ENCODE measurements at regions of chr9 and their contacts with region 1.

Region 1: DNA sequence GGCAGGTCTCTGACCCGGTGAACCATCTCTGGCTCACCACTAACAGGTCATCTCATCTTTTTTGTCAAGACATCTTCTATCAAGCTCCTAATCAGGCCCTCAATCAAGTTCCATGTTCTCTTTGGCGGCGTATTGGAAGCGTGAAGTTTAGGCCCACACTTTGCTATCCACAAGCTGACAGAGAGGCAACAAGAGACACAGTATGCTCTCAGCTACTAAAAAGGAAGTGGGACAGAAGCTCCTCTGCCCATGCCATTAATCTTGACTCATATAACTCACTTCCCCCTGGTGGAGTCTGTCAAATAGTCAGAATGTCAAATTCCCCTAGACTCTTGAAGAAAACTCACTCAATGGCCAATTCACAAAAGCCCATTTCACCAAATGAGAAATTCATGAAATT is 77.6 kb upstream of the TMC1 start:
- DNase-seq: peak; percentile 8
- ATAC-seq: peak; percentile 72
- H3K4me3 Mint-ChIP-seq: no peak overlapping the region
- H3K27ac Mint-ChIP-seq: peak overlapping the region; percentile 55
- H3K4me1 Mint-ChIP-seq: peaks cover 24% of the 10 kb centered on the region
- H3K27me3 Mint-ChIP-seq: no peaks in the 10 kb centered on the region

Region 2: DNA sequence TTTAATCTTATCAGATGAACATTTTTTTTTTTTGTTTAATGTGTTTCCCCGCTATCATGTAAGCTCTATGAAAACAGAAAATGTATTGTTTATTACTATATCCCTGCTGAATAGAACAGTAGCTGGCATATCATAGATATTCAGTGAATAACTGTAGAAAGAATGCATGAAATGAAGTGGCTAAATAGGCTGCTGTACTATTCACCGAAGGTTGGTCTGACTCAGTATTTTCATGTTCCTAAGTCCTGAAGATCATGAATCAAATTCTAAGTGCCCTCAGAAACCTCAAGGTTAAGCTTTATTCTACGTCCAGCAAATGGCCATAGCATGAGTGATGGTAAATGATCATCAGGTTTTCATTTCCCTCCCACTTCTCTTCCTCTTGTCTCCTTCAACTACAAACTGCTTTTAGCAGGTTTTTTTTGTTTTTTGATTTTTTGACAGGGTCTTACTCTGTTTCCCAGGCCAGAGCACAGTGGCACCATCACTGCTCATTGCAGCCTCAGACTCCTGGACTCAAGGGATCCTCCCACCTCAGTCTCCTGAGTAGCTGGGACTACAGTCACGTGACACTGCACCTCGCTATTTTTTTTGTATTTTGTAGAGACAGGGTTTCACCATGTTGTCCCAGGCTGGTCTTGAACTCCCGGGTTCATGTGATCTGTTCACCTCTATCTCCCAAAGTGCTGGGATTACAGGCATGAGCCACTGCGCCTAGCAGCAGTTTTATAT is 59.7 kb before region 1 on chr9:
- CTCF ChIA-PET with region 1: no interaction called
- POLR2A ChIA-PET with region 1: no interaction called
- intact Hi-C with region 1: loop called in 1 of 2 experiments (anchors 2 kb)
- DNase-seq: no peak
- ATAC-seq: no peak
- H3K4me3 Mint-ChIP-seq: no peak overlapping the region
- H3K27ac Mint-ChIP-seq: no peak overlapping the region
- H3K4me1 Mint-ChIP-seq: peaks cover 9% of the 10 kb centered on the region
- H3K27me3 Mint-ChIP-seq: peaks cover 2% of the 10 kb centered on the region

Region 3: GRCh38 chr9:72485821-72486593 is 42.2 kb after region 1 on chr9:
- CTCF ChIA-PET with region 1: no interaction called
- POLR2A ChIA-PET with region 1: no interaction called
- intact Hi-C with region 1: no loop called
- DNase-seq: no peak
- ATAC-seq: no peak
- H3K4me3 Mint-ChIP-seq: no peak overlapping the region
- H3K27ac Mint-ChIP-seq: no peak overlapping the region
- H3K4me1 Mint-ChIP-seq: no peaks in the 10 kb centered on the region
- H3K27me3 Mint-ChIP-seq: peaks cover 2% of the 10 kb centered on the region

Region 4: DNA sequence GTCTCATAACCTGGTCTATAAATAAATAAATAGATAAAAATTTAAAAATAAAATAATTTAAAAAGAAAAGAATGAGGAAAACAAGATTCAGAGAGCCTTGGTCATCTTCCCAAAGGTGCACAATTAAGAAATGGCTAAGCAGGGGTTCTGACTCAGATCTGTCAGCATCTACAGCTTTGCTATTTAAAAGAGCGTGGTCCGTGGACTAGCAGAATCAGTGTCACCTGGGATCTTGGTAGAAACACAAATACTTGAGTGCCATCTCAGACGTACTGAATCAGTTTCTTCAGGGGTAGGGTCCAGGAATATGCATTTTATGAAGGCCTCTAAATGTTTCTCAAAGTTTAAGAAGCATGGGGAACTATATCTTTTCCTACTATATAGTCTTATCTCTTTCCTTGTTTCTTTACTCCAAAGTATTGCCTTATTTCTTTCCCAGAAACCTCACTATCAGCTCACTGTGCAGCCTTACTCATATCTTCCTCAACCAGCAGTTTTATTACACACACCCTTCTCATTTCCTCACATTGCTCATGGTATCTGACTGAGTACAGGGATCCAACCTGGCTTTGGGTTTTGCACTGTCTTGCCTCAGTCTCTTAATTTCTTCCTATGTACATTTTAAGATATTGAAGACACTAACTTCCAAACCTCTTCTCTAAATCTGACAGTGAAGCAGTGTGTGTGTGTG is 136.2 kb after region 1 on chr9:
- CTCF ChIA-PET with region 1: no interaction called
- POLR2A ChIA-PET with region 1: no interaction called
- intact Hi-C with region 1: loop called in 1 of 2 experiments (anchors 5 kb)
- DNase-seq: no peak
- ATAC-seq: peak; percentile 89
- H3K4me3 Mint-ChIP-seq: no peak overlapping the region
- H3K27ac Mint-ChIP-seq: no peak overlapping the region
- H3K4me1 Mint-ChIP-seq: peaks cover 21% of the 10 kb centered on the region
- H3K27me3 Mint-ChIP-seq: peaks cover 3% of the 10 kb centered on the region

Region 5: DNA sequence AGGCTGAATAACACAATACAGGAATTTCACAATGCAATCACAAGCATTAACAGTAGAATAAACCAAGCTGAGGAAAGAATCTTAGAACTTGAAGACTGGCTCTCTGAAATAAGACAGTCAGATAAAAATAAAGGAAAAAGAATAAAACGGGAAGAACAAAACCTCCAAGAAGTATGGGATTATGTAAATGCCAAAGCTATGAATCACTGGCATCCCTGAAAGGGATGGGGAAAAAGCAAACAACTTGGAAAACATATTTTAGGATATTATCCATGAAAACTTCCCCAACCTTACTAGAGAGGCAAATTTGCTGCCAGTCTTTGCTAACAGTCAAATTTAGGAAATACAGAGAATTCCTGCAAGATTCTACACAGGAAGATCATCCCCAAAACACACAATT is 351.1 kb after region 1 on chr9:
- CTCF ChIA-PET with region 1: no interaction called
- POLR2A ChIA-PET with region 1: no interaction called
- intact Hi-C with region 1: no loop called
- DNase-seq: no peak
- ATAC-seq: no peak
- H3K4me3 Mint-ChIP-seq: no peak overlapping the region
- H3K27ac Mint-ChIP-seq: no peak overlapping the region
- H3K4me1 Mint-ChIP-seq: no peaks in the 10 kb centered on the region
- H3K27me3 Mint-ChIP-seq: peaks cover 8% of the 10 kb centered on the region

Measured in activated CD4-positive, alpha-beta T cell treated with anti-CD3 and anti-CD28 coated beads for 36 hours (primary cell).